A549 (cell line): ENCODE measurements at regions of chr17 and their contacts with region 1.

Region 1: DNA sequence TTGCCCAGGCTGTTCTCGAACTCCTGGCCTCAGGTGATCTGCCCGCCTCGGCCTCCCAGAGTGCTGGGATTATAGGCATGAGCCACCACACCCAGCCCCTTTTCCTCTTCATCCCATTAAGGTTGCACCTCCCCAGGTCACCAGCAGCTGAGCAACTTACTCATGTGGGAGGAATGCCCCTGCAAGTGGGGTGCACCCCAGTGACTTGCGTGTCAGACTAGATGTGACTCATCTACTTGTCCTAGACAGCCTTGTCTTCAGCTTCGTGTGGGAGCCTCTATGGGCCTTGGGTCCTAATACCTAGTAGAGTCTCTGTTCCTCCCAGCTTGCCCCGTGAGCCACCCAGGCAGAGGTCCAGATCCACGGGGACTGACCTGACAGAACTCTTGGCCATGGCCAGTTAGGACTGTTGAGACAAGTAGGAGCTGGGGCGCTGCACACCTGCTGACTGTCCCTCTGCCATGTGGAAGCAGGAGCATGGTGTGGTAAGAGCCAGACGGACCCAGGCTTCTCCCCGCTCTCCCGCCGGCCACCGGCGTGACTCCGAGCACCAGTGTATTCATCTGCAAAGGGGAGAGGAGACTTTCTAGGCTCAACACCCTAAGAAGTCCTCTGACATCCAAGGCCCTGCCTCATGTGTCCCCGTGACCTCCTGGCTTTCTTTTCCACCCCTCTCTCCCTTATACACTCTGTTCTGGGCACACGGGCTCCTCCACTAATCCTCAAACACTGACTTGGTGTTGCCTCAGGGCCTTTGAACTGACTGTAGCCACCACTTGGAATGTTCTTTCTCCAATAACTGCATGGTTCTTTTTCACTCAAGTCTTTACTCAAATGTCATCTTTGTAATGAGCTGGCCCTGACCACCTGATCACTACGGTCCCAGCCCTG is 11.6 kb upstream of the CBX4 start:
- DNase-seq: peak; percentile 90 to 99
- ATAC-seq: peak; percentile 78 to 87
- H3K4me3 ChIP-seq: no peak overlapping the region
- H3K27ac ChIP-seq: peak overlapping the region; percentile 71 to 83
- H3K4me1 ChIP-seq: peaks cover 36% of the 10 kb centered on the region
- CTCF ChIP-seq: no peak
- EP300 ChIP-seq: no peak; a peak in 1 of 5 replicates
- POLR2A ChIP-seq: no peak
- RAD21 ChIP-seq: peak; percentile 13 to 17; a peak in 1 of 5 replicates

Region 2: DNA sequence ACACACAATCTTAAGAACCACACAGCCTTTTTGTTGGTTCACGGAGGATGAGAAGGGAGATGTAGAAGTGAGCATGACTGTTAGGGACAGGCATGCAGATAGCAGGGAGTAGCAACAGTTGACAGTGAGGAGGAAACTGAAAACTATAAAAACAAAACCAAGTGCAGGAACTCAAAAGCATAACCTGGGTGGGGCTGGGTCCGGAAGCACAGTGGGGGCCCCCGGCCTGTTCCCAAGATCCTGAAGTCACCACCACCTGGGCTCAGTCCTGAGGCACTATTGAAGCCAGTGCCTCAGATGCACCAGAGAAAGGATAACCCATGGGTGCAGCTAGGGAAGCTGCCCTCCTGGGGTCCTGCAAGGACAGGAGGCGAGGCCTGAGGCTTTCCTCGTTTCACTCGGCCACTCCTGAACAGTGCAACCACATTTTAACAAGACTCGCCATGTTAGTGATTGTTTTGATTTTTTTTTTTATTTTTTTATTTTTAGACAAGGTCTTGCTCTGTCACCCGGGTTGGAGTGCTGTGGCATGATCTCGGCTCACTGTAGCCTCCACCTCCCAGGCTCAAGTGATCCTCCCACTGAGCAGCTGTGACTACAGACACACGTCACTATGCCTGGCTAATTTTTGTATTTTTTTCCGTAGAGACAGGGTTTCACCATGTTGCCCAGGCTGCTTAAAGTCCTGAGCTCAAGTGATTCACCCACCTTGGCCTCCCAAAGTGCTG is 16.1 kb after region 1 on chr17:
- CTCF ChIA-PET with region 1: interaction called, 20 read pairs
- POLR2A ChIA-PET with region 1: no interaction called
- DNase-seq: no peak
- ATAC-seq: no peak
- H3K4me3 ChIP-seq: no peak overlapping the region
- H3K27ac ChIP-seq: no peak overlapping the region
- H3K4me1 ChIP-seq: no peaks in the 10 kb centered on the region
- CTCF ChIP-seq: no peak
- EP300 ChIP-seq: no peak
- POLR2A ChIP-seq: no peak
- RAD21 ChIP-seq: no peak